ENCODE measurements at regions of chr11 and their contacts with region 1.

Region 1: GRCh38 chr11:363948-364761 is 5.1 kb upstream of the B4GALNT4 start:
- DNase-seq: peak; percentile 38 to 64
- ATAC-seq: peak; percentile 22 to 48; a peak in 3 of 6 replicates
- H3K4me3 ChIP-seq: no peak overlapping the region
- H3K27ac ChIP-seq: peak overlapping the region in 1 of 2 experiments; percentile 6; a peak in 1 of 6 replicates
- H3K4me1 ChIP-seq: peaks cover 8% of the 10 kb centered on the region; the same call in 2 of the 3 replicates
- CTCF ChIP-seq: peak; percentile 18; the same call in 1 of the 3 replicates
- EP300 ChIP-seq: no peak
- POLR2A ChIP-seq: no peak
- RAD21 ChIP-seq: no peak

Region 2: GRCh38 chr11:288328-289144 is 75.6 kb before region 1 on chr11 and contains the start of gene PGGHG:
- CTCF ChIA-PET with region 1: interaction called, 11 read pairs
- POLR2A ChIA-PET with region 1: no interaction called
- DNase-seq: peak in 1 of 2 experiments; percentile 86
- ATAC-seq: peak; percentile 74 to 75
- H3K4me3 ChIP-seq: peak within 1 kb of the TSS; percentile 94
- H3K27ac ChIP-seq: peak within 1 kb of the TSS; percentile 92 to 96
- H3K4me1 ChIP-seq: peaks cover 5% of the 10 kb centered on the region; the same call in 1 of the 3 replicates
- CTCF ChIP-seq: no peak
- EP300 ChIP-seq: no peak
- POLR2A ChIP-seq: no peak
- RAD21 ChIP-seq: no peak
- polyA plus RNA-seq, gene PGGHG: 7.2 and 7.9 TPM in 2 replicates

Measured in A549 (cell line).